Activated CD4-positive, alpha-beta T cell treated with anti-CD3 and anti-CD28 coated beads for 36 hours (primary cell): ENCODE measurements at regions of chr20 and their contacts with region 1.

Region 1: GRCh38 chr20:45362804-45363610 is at the start of gene SYS1:
- DNase-seq: peak; percentile 99
- ATAC-seq: peak; percentile 93
- H3K4me3 Mint-ChIP-seq: peak within 1 kb of the TSS; percentile 95
- H3K27ac Mint-ChIP-seq: peak within 1 kb of the TSS; percentile 98
- H3K4me1 Mint-ChIP-seq: peaks cover 43% of the 10 kb centered on the region
- H3K27me3 Mint-ChIP-seq: no peaks in the 10 kb centered on the region
- total RNA-seq, gene SYS1: 16.1 to 26.1 TPM

Region 2: GRCh38 chr20:44966030-44966961 is 396.7 kb before region 1 on chr20 and contains the start of gene STK4:
- CTCF ChIA-PET with region 1: no interaction called
- POLR2A ChIA-PET with region 1: interaction called, 5 read pairs
- intact Hi-C with region 1: loop called in 1 of 2 experiments (anchors 1 kb)
- DNase-seq: peak; percentile 97
- ATAC-seq: peak; percentile 71
- H3K4me3 Mint-ChIP-seq: peak within 1 kb of the TSS; percentile 94
- H3K27ac Mint-ChIP-seq: peak within 1 kb of the TSS; percentile 98
- H3K4me1 Mint-ChIP-seq: peaks cover 55% of the 10 kb centered on the region
- H3K27me3 Mint-ChIP-seq: no peaks in the 10 kb centered on the region
- total RNA-seq, gene STK4: 156 to 164 TPM

Region 3: GRCh38 chr20:45373353-45374100 is 10.5 kb after region 1 on chr20:
- CTCF ChIA-PET with region 1: interaction called, 87 read pairs
- POLR2A ChIA-PET with region 1: interaction called, 17 read pairs
- intact Hi-C with region 1: loop called in 1 of 2 experiments (anchors 1 kb)
- DNase-seq: peak; percentile 96
- ATAC-seq: peak; percentile 97
- H3K4me3 Mint-ChIP-seq: peak overlapping the region; percentile 75
- H3K27ac Mint-ChIP-seq: peak overlapping the region; percentile 91
- H3K4me1 Mint-ChIP-seq: peaks cover 29% of the 10 kb centered on the region
- H3K27me3 Mint-ChIP-seq: no peaks in the 10 kb centered on the region

Region 4: DNA sequence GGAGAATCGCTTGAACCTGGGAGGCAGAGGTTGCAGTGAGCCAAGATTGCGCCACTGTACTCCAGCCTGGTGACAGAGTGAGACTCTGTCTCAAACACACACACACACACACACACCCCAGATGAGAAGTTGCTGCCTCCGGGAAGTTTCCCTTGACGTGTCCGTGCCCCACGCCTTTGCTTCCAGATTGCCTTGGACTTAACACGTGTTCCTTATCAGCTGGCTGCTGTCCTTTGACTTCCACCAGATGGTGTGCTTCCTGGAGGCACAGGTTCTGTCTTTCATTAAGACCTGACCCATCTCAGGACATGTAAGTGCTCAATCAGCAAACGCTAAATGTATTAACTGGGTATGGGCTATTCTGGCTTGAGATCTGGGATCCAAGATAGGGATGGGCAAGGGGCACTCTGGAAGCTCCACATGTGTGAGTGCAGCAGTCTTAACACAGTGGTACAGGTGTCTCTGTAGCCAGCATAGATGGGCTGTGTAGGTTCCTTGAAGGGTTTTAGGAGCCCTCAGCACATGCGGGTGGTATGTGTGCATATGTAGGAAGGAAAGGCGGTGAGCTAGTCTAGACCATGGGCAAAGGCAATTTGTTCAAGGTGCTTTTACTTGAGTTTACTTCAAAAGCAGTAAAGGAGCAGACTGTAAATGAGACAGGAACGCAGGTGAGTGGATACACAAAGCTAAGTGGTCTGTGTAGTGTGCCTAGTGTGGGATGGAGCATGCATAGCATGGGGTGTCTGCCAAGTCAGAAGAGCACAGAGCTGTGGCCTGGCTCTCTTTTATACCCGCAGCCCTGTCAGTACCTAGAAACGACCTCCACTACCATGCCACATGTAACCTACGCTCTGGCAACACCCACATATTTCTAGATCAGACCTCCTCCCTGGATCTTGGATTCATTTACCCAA is 64.5 kb after region 1 on chr20:
- CTCF ChIA-PET with region 1: interaction called, 10 read pairs
- POLR2A ChIA-PET with region 1: interaction called, 3 read pairs
- intact Hi-C with region 1: no loop called
- DNase-seq: no peak
- ATAC-seq: no peak
- H3K4me3 Mint-ChIP-seq: no peak overlapping the region
- H3K27ac Mint-ChIP-seq: no peak overlapping the region
- H3K4me1 Mint-ChIP-seq: peaks cover 5% of the 10 kb centered on the region
- H3K27me3 Mint-ChIP-seq: no peaks in the 10 kb centered on the region

Region 5: DNA sequence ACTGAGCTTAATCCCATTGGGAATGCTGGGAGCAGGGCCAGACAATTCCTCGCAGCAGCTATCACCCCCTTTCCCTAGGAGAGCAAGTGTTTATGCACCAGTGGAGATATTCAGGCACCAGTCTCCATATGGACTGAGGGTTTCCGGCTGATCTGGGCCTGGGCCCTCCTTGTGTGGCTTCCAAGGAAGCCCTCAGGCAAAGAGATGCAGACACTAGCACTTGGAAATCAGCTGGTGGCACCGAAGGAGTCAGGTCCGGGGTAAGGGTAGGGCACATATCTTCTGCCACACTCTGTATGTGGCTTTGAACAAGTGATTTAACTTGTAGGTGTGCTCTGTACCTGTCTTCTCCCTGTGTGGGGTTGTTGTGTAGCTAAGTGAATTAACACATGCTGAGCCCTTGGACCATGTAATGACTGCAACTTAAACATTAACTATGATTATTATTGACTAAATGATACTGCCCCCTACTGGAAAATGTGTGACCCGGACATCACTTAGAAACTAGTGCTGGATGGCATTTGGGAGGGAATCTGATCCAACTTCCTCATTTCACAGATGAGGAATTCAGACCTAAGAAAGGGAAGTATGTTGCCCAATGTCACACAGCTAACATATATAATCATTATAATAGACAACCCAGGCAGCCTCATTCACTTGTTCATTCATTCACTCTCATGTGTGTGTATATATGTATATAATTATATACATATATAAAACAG is 87.3 kb after region 1 on chr20:
- CTCF ChIA-PET with region 1: interaction called, 14 read pairs
- POLR2A ChIA-PET with region 1: no interaction called
- intact Hi-C with region 1: loop called in 1 of 2 experiments (anchors 5 kb)
- DNase-seq: peak; percentile 24
- ATAC-seq: peak; percentile 53
- H3K4me3 Mint-ChIP-seq: no peak overlapping the region
- H3K27ac Mint-ChIP-seq: no peak overlapping the region
- H3K4me1 Mint-ChIP-seq: peaks cover 2% of the 10 kb centered on the region
- H3K27me3 Mint-ChIP-seq: peaks cover 4% of the 10 kb centered on the region

Region 6: GRCh38 chr20:45880988-45881788 is 518.2 kb after region 1 on chr20 and contains the start of gene ZSWIM1:
- CTCF ChIA-PET with region 1: no interaction called
- POLR2A ChIA-PET with region 1: no interaction called
- intact Hi-C with region 1: loop called in 1 of 2 experiments (anchors 10 kb)
- DNase-seq: peak; percentile 99
- ATAC-seq: peak; percentile 98
- H3K4me3 Mint-ChIP-seq: peak within 1 kb of the TSS; percentile 94
- H3K27ac Mint-ChIP-seq: peak within 1 kb of the TSS; percentile 95
- H3K4me1 Mint-ChIP-seq: peaks cover 42% of the 10 kb centered on the region
- H3K27me3 Mint-ChIP-seq: no peaks in the 10 kb centered on the region
- total RNA-seq, gene ZSWIM1: 9.4 to 10.7 TPM

Region 7: DNA sequence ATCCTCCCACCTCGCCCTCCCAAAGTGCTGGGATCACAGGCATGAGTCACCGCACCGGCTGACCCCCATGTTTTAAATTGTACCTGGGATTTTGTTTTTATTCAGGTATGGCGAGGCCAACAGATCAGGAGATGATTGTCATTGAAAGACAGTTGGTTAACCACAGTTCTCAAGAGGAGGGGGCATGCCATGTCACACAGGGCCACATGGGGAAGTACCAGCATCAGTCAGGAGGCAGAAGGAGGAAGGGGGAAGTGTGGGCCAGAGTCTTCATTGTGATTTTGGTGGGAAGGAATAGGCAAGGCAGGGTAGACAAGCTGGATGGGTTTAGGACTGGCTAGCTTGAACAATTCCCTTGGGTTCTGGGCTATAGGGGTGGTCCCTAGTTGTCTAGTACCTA is 635.8 kb after region 1 on chr20:
- CTCF ChIA-PET with region 1: no interaction called
- POLR2A ChIA-PET with region 1: no interaction called
- intact Hi-C with region 1: no loop called
- DNase-seq: peak; percentile 59
- ATAC-seq: peak; percentile 85
- H3K4me3 Mint-ChIP-seq: no peak overlapping the region
- H3K27ac Mint-ChIP-seq: peak overlapping the region; percentile 2
- H3K4me1 Mint-ChIP-seq: peaks cover 66% of the 10 kb centered on the region
- H3K27me3 Mint-ChIP-seq: no peaks in the 10 kb centered on the region